ENCODE measurements at regions of chr19 and their contacts with region 1.

Region 1: GRCh38 chr19:49817964-49818648 is at the start of gene MED25:
- DNase-seq: peak; percentile 76
- ATAC-seq: peak; percentile 76
- H3K4me3 ChIP-seq: peak within 1 kb of the TSS; percentile 68
- H3K27ac ChIP-seq: peak within 1 kb of the TSS; percentile 84
- H3K4me1 ChIP-seq: peaks cover 6% of the 10 kb centered on the region
- H3K27me3 ChIP-seq: no peaks in the 10 kb centered on the region
- CTCF ChIP-seq: no peak
- POLR2A ChIP-seq: no peak; the same call in none of the 2 replicates
- RAD21 ChIP-seq: no peak
- total RNA-seq, gene MED25: 4.7 and 5.3 TPM in 2 replicates

Region 2: DNA sequence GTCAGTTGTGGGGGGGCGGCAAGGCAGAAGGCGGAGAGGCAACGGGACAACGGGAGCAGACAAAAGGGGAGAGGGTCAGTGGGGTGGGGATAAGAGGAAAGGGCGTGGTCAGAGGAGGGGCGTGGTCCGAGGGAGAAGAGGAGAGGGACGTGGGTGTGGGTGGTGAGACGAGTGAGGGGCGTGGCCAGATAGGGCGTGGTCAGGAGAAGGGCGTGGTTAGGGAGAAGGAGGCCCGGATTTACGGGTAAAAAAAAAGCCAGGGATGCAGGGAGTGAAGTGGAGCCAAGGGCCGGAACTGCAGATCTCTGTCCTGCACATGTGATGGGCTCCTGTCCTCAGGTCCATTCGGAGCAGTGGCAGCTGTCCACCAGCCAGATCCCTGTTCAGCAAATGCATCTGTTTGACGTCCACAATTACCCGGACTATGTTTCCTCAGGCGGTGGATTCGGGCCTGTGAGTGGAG is 105.7 kb before region 1 on chr19:
- CTCF ChIA-PET with region 1: no interaction called
- POLR2A ChIA-PET with region 1: no interaction called
- dilution Hi-C with region 1: no loop called
- in situ Hi-C with region 1: no loop called
- intact Hi-C with region 1: loop called (anchors 10 kb)
- DNase-seq: peak; percentile 1
- ATAC-seq: no peak
- H3K4me3 ChIP-seq: no peak overlapping the region
- H3K27ac ChIP-seq: no peak overlapping the region
- H3K4me1 ChIP-seq: peaks cover 2% of the 10 kb centered on the region; the same call in 1 of the 2 replicates
- H3K27me3 ChIP-seq: no peaks in the 10 kb centered on the region
- CTCF ChIP-seq: no peak
- POLR2A ChIP-seq: no peak
- RAD21 ChIP-seq: no peak

Region 3: DNA sequence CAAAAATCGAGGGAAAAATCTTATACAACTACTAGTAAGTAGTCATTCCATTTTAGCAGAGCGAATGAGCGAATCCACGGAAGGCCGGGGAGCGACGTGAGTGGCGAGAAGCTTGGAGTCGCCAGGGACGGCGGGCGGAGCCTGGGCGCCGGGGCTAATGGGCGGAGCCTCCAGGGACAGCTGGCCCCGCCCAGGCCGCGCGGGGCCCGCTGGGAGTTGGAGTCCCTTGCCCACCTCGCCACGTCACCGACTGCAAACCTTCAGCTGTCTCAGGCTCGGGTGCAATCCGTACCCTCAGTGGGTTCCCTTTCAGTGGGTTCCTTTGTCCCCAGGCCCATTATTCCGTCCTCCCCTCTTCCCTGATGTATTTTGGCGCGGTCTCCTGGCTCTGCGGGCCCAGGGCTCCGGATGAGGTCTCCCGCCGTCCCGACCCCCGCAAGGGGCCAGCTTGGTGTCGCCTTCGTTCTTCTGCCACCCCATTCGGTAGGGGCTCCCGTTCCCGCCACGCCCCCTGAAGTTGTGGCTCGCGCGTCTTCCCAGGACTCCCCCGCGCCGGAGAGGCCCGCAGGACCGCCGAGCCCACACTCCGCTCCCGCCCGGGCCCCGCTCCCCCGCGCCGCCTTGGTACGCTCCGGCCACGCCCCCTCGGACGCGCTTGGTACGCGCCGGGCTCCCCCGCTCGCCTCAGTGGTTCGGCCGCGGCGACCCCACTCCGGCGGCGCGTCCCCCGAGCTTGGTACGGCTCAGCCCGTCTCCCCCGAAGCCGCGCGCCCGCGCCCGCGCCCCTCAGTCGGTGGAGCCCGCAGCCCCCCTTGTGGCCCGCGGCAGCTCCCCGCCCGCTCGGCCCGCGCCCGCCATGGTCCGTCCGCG is 32.6 kb after region 1 on chr19 and contains the start of gene PTOV1:
- CTCF ChIA-PET with region 1: no interaction called
- POLR2A ChIA-PET with region 1: interaction called, 5 read pairs
- dilution Hi-C with region 1: no loop called
- in situ Hi-C with region 1: no loop called
- intact Hi-C with region 1: loop called (anchors 2 kb)
- DNase-seq: peak; percentile 91
- ATAC-seq: peak; percentile 85
- H3K4me3 ChIP-seq: peak within 1 kb of the TSS; percentile 60
- H3K27ac ChIP-seq: peak within 1 kb of the TSS; percentile 94
- H3K4me1 ChIP-seq: peaks cover 16% of the 10 kb centered on the region
- H3K27me3 ChIP-seq: no peaks in the 10 kb centered on the region
- CTCF ChIP-seq: no peak
- POLR2A ChIP-seq: peak; percentile 84
- RAD21 ChIP-seq: no peak
- total RNA-seq, gene PTOV1: 34.4 and 36.1 TPM in 2 replicates

Measured in IMR-90 (cell line).